AG04449 (cell line): ENCODE measurements at regions of chr22 and their contacts with region 1.

Region 1: DNA sequence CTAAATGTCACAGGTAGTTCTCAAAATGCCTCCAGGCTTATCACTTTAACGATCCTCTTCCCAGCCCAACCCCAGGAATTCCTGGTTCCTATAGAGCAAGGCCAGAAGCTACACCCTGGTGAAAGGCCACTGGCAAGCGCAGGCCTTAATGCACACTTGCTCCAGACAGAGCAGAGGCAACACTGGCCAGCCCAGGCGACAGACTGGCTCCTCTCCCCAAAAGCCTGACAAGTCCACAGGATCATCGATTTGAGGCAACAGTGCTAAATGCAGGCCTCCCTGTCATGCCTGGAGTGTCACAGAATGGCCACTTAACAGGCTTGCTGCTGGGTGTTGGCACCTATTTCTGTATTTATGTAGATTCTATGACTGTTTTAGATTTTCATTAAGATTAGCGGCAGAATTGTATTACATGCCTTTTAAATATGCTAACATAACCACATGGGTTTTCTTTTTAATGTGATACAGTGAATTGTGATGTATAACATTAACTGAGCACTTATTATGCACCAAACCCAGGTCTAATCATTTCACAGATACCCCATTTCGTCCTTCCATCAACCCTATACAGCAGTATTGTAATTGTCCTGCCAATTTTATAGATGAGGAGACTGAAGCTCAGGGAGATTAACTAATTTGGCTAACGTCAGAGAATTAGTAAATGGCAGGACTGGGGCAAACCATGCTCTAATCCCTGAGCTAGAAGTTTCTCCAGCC is 38.6 kb downstream of the PACSIN2 start:
- DNase-seq: no peak
- H3K4me3 ChIP-seq: no peak overlapping the region
- CTCF ChIP-seq: no peak

Region 2: DNA sequence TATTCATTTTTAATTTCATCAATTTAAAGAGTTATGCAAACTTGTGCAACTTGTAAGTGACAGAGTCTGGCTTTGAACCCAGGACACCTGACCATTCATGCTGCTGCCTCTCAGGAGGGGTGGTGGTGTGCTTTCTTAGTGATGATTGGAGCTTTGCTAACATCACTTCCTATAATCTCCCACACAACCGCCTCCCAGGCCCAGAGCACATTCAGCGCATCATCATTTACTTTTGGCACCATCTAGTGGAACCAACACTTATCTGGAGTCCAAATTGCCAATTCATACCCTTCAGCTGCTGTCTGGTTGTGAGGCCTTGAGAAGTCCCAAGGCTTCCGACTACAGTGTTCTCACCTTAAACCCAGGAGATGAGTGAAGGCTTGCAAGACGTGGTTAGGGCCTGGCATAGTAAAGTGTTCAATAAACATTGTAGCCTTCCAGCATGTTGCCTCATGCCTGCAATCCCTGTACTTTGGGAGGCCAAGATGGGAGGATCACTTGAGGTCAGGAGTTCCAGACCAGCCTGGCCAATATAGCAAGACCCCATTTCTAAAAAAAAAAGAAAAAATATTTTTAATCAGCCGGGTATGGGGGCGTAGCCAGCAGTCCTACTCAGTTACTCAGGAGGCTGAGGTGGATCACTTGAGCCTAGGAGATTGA is 113.9 kb after region 1 on chr22:
- CTCF ChIA-PET with region 1: interaction called, 10 read pairs
- POLR2A ChIA-PET with region 1: no interaction called
- DNase-seq: peak; percentile 50
- H3K4me3 ChIP-seq: no peak overlapping the region
- CTCF ChIP-seq: peak; percentile 64